Common myeloid progenitor, CD34-positive (primary cell): ENCODE measurements at regions of chr20 and their contacts with region 1.

Region 1: GRCh38 chr20:60249436-60249835 is 291.2 kb downstream of the CDH26 start:
- DNase-seq: no peak
- H3K4me3 ChIP-seq: no peak overlapping the region
- H3K27ac ChIP-seq: no peak overlapping the region
- H3K4me1 ChIP-seq: no peaks in the 10 kb centered on the region
- H3K27me3 ChIP-seq: peaks cover 0 to 3% (median 1%) of the 10 kb centered on the region in 5 experiments

Region 2: GRCh38 chr20:60262967-60263603 is 13.6 kb after region 1 on chr20:
- CTCF ChIA-PET with region 1: interaction called, 19 read pairs
- POLR2A ChIA-PET with region 1: interaction called, 3 read pairs
- DNase-seq: peak; percentile 36 to 63 (median 57)
- H3K4me3 ChIP-seq: no peak overlapping the region
- H3K27ac ChIP-seq: no peak overlapping the region
- H3K4me1 ChIP-seq: peaks cover 0 to 12% (median 7%) of the 10 kb centered on the region in 4 experiments
- H3K27me3 ChIP-seq: no peaks in the 10 kb centered on the region

Region 3: DNA sequence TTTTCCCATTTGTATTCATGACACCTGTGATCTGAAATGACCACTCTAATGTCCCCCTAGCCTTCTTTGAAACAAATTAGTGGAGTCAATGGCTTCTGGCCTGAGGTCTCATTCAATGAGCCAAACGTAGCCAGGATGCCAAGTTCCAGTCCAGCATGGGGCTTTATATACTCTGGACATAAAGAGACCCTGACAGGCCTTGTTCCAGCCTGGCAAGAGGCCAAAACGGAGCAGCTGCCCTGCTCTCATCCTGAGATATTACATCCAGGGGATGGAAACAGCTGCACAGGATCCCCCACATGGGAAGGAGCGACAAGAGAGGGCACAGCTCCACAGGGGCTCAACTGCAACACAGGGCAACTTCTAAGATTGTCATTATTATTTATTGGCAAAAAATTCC is 146.6 kb after region 1 on chr20:
- CTCF ChIA-PET with region 1: no interaction called
- POLR2A ChIA-PET with region 1: no interaction called
- DNase-seq: no peak
- H3K4me3 ChIP-seq: no peak overlapping the region
- H3K27ac ChIP-seq: no peak overlapping the region
- H3K4me1 ChIP-seq: no peaks in the 10 kb centered on the region
- H3K27me3 ChIP-seq: peaks cover 0 to 22% (median 2%) of the 10 kb centered on the region in 5 experiments